Heart right ventricle (tissue), 16 donors: ENCODE measurements at regions of chr4 and their contacts with region 1.

Region 1: GRCh38 chr4:149815743-149816142 is at the start of gene IQCM:
- DNase-seq: no peak
- ATAC-seq: no peak
- H3K4me3 ChIP-seq: no peak within 1 kb of the TSS
- H3K27ac ChIP-seq: no peak within 1 kb of the TSS
- H3K4me1 ChIP-seq: no peaks in the 10 kb centered on the region
- H3K27me3 ChIP-seq: no peaks in the 10 kb centered on the region
- CTCF ChIP-seq: no peak
- total RNA-seq, gene IQCM: not detected

Region 2: DNA sequence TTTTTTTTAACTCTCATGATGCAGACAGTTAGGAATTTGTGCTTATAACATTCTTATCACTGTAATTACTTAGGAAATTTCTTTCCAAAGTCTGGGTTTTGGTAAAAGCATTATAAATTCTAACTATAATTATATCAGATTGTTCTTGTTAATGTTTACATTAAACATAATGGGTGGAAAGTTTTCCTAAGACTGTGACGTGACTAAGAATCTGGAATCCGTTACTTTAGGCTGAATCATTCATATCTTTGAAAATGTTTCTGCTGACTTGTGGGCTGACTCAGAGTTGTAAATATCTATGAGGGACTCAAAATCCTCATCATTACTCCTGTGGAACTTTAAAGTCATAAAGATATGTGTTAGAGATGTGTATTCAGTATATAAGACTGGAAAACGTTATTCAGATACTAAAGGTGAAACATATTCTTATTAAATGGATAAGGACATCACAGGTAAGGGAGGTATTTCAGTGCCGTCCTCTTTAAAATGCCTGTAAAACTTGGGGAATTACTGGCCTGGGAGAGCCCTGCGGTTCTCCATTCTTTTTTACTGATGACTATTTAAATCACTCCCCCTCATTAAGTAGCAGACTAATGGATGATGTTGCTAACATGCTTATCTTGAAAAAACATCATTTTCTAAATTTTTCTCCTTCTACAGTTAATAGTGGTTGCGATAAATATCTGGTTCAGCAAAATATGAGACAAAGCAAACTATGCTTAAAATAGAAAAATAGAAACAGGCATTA is 421.5 kb after region 1 on chr4:
- intact Hi-C with region 1: loop called in 1 of 10 experiments (anchors 10 kb)
- DNase-seq: no peak
- ATAC-seq: peak in 2 of 8 donors; percentile 30 to 37
- H3K4me3 ChIP-seq: no peak overlapping the region
- H3K27ac ChIP-seq: no peak overlapping the region
- H3K4me1 ChIP-seq: peaks cover 0 to 23% (median 5%) of the 10 kb centered on the region in 9 donors
- H3K27me3 ChIP-seq: no peaks in the 10 kb centered on the region
- CTCF ChIP-seq: no peak